Esophagus muscularis mucosa (tissue), 4 donors: ENCODE measurements at regions of chr14 and their contacts with region 1.

Region 1: GRCh38 chr14:69252851-69253250 is 7.1 kb upstream of the GALNT16 start:
- DNase-seq: no peak
- H3K4me3 ChIP-seq: no peak overlapping the region
- H3K27ac ChIP-seq: no peak overlapping the region
- H3K4me1 ChIP-seq: peaks cover 6 to 17% (median 11%) of the 10 kb centered on the region in 4 donors
- H3K27me3 ChIP-seq: peaks cover 0 to 5% (median 0%) of the 10 kb centered on the region in 4 donors
- CTCF ChIP-seq: no peak
- EP300 ChIP-seq: no peak
- POLR2A ChIP-seq: no peak

Region 2: GRCh38 chr14:69346710-69347109 is 93.9 kb after region 1 on chr14:
- intact Hi-C with region 1: loop called (anchors 5 kb)
- DNase-seq: no peak
- H3K4me3 ChIP-seq: no peak overlapping the region
- H3K27ac ChIP-seq: no peak overlapping the region
- H3K4me1 ChIP-seq: peaks cover 0 to 6% (median 2%) of the 10 kb centered on the region in 4 donors
- H3K27me3 ChIP-seq: no peaks in the 10 kb centered on the region
- CTCF ChIP-seq: peak; percentile 42 to 61 (median 45)
- EP300 ChIP-seq: no peak
- POLR2A ChIP-seq: no peak